ENCODE measurements at regions of chr2 and their contacts with region 1.

Region 1: DNA sequence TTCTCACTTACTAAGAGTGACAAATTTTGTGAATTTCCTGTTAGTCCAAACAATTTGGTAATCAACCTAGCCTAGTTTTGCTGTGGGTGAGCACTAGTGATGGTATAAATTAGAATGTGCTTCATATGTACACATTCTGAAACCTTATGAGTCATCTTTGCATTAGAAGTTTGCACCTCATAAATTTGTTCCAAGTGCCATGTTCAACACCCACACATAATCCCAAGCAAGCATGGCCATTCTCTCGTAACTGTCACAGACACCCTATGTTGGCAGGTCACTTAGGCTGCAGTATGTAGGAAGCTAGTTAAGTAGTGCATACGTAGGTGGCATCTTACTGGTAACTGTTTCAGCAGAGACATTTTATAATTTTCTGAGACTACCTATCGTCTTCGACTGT is 46.9 kb downstream of the NAB1 start:
- DNase-seq: no peak
- H3K4me3 ChIP-seq: no peak overlapping the region
- CTCF ChIP-seq: no peak
- POLR2A ChIP-seq: no peak

Region 2: DNA sequence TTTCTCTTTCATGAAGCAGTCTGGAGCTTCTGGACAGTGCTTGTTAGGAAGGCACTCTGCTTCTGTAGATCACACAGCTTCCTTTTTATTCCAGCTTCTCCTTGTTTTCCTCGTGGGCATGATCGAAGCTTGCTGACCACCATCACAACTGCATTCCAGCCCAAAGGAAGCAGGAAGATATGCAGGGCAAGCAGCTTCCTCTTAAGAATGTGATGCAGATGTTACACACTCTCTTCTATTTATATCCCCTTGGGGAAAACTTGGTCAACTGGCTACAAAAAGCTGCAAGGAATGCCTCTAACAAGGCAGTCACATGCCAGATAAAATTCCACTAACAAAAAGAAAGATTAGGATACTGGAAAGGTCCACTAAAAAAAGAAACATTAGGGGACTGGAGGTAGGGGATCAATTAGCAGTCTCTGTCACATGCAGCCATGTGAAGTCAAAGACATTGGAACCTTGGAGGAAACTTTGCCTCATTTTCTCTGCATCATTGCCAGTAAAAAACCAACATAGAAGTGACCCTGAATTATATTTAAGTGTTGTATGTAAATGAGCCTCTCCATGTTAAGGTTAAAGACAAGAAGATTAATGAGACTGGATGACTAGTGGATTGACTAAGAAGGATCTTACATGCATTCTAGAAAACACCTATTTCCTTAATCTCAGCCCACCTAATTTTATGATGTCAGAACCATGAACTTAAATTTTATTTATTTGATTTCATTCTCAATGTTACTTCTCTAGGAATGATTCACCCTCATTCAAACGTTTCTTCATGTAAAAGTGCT is 51.4 kb after region 1 on chr2:
- intact Hi-C with region 1: no loop called
- DNase-seq: no peak
- H3K4me3 ChIP-seq: no peak overlapping the region
- CTCF ChIP-seq: no peak
- POLR2A ChIP-seq: no peak

Region 3: GRCh38 chr2:190799999-190800398 is 104.3 kb after region 1 on chr2:
- intact Hi-C with region 1: loop called (anchors 2 kb)
- DNase-seq: no peak
- H3K4me3 ChIP-seq: no peak overlapping the region
- CTCF ChIP-seq: no peak
- POLR2A ChIP-seq: no peak